Stomach (tissue), 19 donors: ENCODE measurements at regions of chr3 and their contacts with region 1.

Region 1: GRCh38 chr3:141561426-141562034 is 74.7 kb downstream of the RASA2 start:
- DNase-seq: peak in 1 of 2 donors; percentile 86
- H3K4me3 ChIP-seq: no peak overlapping the region
- H3K27ac ChIP-seq: no peak overlapping the region
- H3K4me1 ChIP-seq: peaks cover 0 to 7% (median 0%) of the 10 kb centered on the region in 4 donors
- H3K27me3 ChIP-seq: no peaks in the 10 kb centered on the region
- CTCF ChIP-seq: peak in 5 of 7 experiments; percentile 89 to 98 (median 91)
- EP300 ChIP-seq: no peak
- POLR2A ChIP-seq: no peak

Region 2: DNA sequence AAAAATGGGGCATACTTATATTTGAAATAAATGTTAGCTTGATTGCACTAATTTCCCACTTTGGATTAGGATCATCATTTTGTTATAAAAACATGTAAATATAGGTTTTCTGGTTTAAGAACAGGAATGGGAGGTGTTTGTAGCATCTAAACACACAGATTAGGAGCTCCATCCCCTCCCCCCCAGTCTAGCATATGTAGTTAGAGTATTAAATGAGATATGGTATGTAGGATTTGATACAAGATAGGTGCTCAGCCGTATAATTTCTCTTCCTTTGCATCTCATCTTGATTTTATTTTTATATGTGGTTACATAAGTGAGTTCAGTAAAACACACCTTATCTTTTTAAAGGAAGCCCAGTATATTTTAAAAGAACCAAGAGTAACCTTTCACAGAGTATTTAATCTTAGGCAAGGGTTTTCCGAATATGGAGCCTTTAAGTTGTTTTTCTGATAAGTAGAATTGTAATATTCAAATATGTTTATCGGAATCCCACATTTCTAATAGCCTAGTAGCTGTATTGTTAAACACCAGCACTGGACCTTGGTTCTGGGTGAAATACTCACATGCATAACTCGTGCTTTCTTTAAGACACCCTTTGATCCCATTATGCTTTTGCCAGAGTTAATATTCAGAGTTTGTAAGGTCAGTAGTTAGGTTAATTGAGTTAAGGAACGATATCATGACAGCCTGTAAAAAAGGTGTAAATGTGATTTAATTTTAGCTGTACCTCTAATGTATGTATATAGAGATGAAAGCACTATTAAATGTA is 617.6 kb before region 1 on chr3:
- intact Hi-C with region 1: no loop called
- DNase-seq: no peak
- H3K4me3 ChIP-seq: peak overlapping the region; percentile 79 to 95 (median 84)
- H3K27ac ChIP-seq: peak overlapping the region in 3 of 5 donors; percentile 98 to 99 (median 99)
- H3K4me1 ChIP-seq: peaks cover 17 to 63% (median 44%) of the 10 kb centered on the region in 4 donors
- H3K27me3 ChIP-seq: no peaks in the 10 kb centered on the region
- CTCF ChIP-seq: no peak
- EP300 ChIP-seq: no peak
- POLR2A ChIP-seq: no peak

Region 3: GRCh38 chr3:141151439-141151838 is 410.1 kb before region 1 on chr3:
- intact Hi-C with region 1: no loop called
- DNase-seq: peak in 1 of 2 donors; percentile 25
- H3K4me3 ChIP-seq: no peak overlapping the region
- H3K27ac ChIP-seq: no peak overlapping the region
- H3K4me1 ChIP-seq: no peaks in the 10 kb centered on the region
- H3K27me3 ChIP-seq: peaks cover 0 to 6% (median 0%) of the 10 kb centered on the region in 3 donors
- CTCF ChIP-seq: no peak
- EP300 ChIP-seq: no peak
- POLR2A ChIP-seq: no peak

Region 4: DNA sequence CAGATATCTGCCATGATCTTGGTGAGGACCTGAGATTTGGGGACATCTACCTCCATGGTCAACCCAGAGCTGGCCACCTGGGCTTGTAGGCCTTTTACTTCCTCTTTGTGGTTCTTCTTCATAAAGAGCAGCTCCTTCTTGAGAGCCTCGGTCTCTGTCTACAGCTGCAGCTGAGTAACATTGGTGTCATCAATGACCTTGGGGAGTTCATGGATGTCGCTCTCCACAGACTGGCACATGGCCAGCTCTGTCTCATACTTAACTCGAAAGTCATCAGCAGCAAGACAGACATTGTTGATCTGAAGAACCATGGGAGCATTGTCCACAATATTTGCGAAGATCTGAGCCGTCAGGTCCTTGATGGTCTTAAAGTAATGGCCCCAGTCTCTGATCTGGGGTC is 90.4 kb before region 1 on chr3:
- intact Hi-C with region 1: loop called (anchors 5 kb)
- DNase-seq: no peak
- H3K4me3 ChIP-seq: no peak overlapping the region
- H3K27ac ChIP-seq: no peak overlapping the region
- H3K4me1 ChIP-seq: no peaks in the 10 kb centered on the region
- H3K27me3 ChIP-seq: no peaks in the 10 kb centered on the region
- CTCF ChIP-seq: no peak
- EP300 ChIP-seq: no peak
- POLR2A ChIP-seq: no peak